Calu3 (cell line): ENCODE measurements at regions of chr1 and their contacts with region 1.

Region 1: GRCh38 chr1:167288390-167289074 is 67.8 kb downstream of the POU2F1 start:
- DNase-seq: no peak
- H3K4me3 Mint-ChIP-seq: no peak overlapping the region
- H3K27ac Mint-ChIP-seq: no peak overlapping the region
- H3K4me1 Mint-ChIP-seq: peaks cover 12% of the 10 kb centered on the region
- H3K27me3 Mint-ChIP-seq: no peaks in the 10 kb centered on the region
- CTCF ChIP-seq: no peak

Region 2: DNA sequence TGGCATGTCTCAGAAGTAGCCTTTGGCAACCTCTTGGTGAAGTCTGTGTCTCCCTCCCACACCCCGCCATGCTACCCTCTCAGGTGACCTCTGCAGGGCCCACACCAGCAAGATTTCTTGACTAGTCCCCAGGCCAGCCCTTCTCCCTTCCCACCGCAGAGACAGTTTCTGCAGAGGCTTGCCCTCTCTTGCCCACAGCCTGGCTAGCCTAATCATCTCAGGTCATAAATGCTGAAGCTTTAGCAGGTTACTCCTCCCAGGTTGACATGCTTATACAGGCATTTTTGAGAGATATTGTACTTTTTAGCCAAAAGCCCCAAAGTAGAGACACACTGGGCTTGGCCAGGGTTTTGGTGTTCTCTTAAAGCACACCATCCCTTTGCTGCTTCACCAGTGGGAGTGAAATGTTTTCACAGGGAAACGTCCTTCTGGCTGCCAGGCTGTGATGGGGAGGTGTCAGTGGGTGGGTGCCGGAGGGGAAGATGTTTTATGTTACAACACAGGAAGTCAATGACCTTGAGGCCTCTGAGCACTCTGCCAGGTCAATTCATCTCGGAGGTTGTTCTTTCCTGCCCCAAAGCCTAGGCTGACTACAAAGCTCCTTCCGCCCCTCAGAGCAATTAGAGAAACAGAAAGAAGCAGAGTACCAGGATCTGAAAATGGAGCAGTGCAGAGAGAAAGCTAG is 136.2 kb before region 1 on chr1:
- CTCF ChIA-PET with region 1: no interaction called
- intact Hi-C with region 1: no loop called
- DNase-seq: no peak
- H3K4me3 Mint-ChIP-seq: no peak overlapping the region
- H3K27ac Mint-ChIP-seq: no peak overlapping the region
- H3K4me1 Mint-ChIP-seq: no peaks in the 10 kb centered on the region
- H3K27me3 Mint-ChIP-seq: no peaks in the 10 kb centered on the region
- CTCF ChIP-seq: no peak

Region 3: GRCh38 chr1:167238713-167239112 is 49.8 kb before region 1 on chr1:
- CTCF ChIA-PET with region 1: no interaction called
- intact Hi-C with region 1: loop called (anchors 5 kb)
- DNase-seq: no peak
- H3K4me3 Mint-ChIP-seq: no peak overlapping the region
- H3K27ac Mint-ChIP-seq: no peak overlapping the region
- H3K4me1 Mint-ChIP-seq: peaks cover 20% of the 10 kb centered on the region
- H3K27me3 Mint-ChIP-seq: no peaks in the 10 kb centered on the region
- CTCF ChIP-seq: no peak